WTC11 (cell line): ENCODE measurements at regions of chr7 and their contacts with region 1.

Region 1: GRCh38 chr7:147593271-147594057 is 997.1 kb upstream of the C7orf33 start:
- DNase-seq: no peak
- ATAC-seq: no peak
- H3K4me3 Mint-ChIP-seq: no peak overlapping the region
- H3K27ac Mint-ChIP-seq: no peak overlapping the region
- H3K4me1 Mint-ChIP-seq: peaks cover 19% of the 10 kb centered on the region
- H3K27me3 Mint-ChIP-seq: no peaks in the 10 kb centered on the region
- CTCF ChIP-seq: no peak

Region 2: DNA sequence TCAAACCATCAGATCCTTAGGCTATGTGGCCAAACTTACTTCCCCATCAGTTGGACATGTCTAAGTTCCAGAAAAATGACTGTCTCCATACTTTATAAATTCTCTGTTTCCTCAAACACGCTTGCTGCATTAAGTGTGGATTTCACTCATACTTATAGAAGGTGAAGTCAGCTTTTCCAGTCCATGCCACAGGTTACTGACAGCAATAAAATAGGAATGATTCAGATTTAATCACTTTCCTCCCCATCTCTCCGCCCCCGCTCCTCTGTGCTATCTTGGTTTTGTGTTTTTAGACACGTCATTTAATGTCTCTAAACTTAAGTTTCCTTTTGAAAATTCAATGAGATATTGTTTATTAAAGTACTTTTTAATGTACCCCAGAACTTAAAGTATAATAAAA is 100.9 kb before region 1 on chr7:
- CTCF ChIA-PET with region 1: no interaction called
- POLR2A ChIA-PET with region 1: interaction called, 10 read pairs
- DNase-seq: no peak
- ATAC-seq: no peak
- H3K4me3 Mint-ChIP-seq: no peak overlapping the region
- H3K27ac Mint-ChIP-seq: no peak overlapping the region
- H3K4me1 Mint-ChIP-seq: peaks cover 3% of the 10 kb centered on the region; the same call in 1 of the 2 replicates
- H3K27me3 Mint-ChIP-seq: no peaks in the 10 kb centered on the region
- CTCF ChIP-seq: no peak

Region 3: GRCh38 chr7:147670759-147671158 is 77.3 kb after region 1 on chr7:
- CTCF ChIA-PET with region 1: no interaction called
- POLR2A ChIA-PET with region 1: no interaction called
- DNase-seq: no peak
- ATAC-seq: no peak
- H3K4me3 Mint-ChIP-seq: no peak overlapping the region
- H3K27ac Mint-ChIP-seq: no peak overlapping the region
- H3K4me1 Mint-ChIP-seq: no peaks in the 10 kb centered on the region
- H3K27me3 Mint-ChIP-seq: no peaks in the 10 kb centered on the region
- CTCF ChIP-seq: no peak